ENCODE measurements at regions of chr5 and their contacts with region 1.

Region 1: GRCh38 chr5:163408311-163408923 is 29.0 kb upstream of the CCNG1 start:
- DNase-seq: peak; percentile 37 to 65
- H3K4me3 ChIP-seq: no peak overlapping the region
- H3K4me3 Mint-ChIP-seq: no peak overlapping the region
- H3K27ac Mint-ChIP-seq: no peak overlapping the region
- H3K4me1 ChIP-seq: no peaks in the 10 kb centered on the region
- H3K4me1 Mint-ChIP-seq: no peaks in the 10 kb centered on the region
- H3K27me3 ChIP-seq: no peaks in the 10 kb centered on the region
- H3K27me3 Mint-ChIP-seq: no peaks in the 10 kb centered on the region
- CTCF ChIP-seq: peak; percentile 85 to 89

Region 2: DNA sequence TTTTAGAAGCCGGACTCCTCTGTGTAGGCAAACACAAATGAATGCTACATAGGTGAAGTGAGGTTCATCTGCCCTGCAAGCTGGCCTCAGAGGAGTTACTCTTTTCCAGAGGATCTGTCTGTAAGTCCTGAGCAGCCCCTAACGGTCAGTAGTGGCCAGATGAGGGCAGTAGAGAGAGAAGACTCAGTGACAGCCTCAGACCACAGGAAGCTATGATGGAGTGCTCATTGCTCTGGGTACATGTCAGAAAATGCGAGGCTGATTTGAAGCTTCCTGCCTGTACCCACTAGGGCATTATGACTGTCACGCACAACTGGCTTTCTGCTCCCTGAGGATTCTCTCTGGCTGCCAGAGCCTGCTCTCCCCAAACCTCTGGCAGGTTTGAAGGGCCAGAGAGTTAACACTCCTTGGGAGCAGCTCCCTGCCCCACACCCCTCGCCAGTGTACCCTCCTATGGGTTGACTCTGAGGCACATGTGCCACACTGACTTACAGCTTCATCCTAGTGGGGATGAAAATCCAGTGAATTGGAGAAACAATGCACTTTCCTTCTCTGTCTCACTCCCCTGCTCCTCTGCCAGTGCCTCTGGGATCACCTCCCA is 1199.3 kb before region 1 on chr5:
- CTCF ChIA-PET with region 1: interaction called, 7 read pairs
- POLR2A ChIA-PET with region 1: no interaction called
- intact Hi-C with region 1: loop called (anchors 1 kb)
- DNase-seq: peak; percentile 66 to 69
- H3K4me3 ChIP-seq: no peak overlapping the region
- H3K4me3 Mint-ChIP-seq: no peak overlapping the region
- H3K27ac Mint-ChIP-seq: no peak overlapping the region
- H3K4me1 ChIP-seq: no peaks in the 10 kb centered on the region
- H3K4me1 Mint-ChIP-seq: no peaks in the 10 kb centered on the region
- H3K27me3 ChIP-seq: no peaks in the 10 kb centered on the region; the same call in 1 of the 2 replicates
- H3K27me3 Mint-ChIP-seq: peaks cover 6% of the 10 kb centered on the region
- CTCF ChIP-seq: peak; percentile 55 to 74

Region 3: GRCh38 chr5:162956570-162956969 is 451.8 kb before region 1 on chr5:
- CTCF ChIA-PET with region 1: no interaction called
- POLR2A ChIA-PET with region 1: no interaction called
- intact Hi-C with region 1: loop called (anchors 5 kb)
- DNase-seq: peak in 1 of 2 experiments; percentile 3
- H3K4me3 ChIP-seq: no peak overlapping the region
- H3K4me3 Mint-ChIP-seq: no peak overlapping the region
- H3K27ac Mint-ChIP-seq: no peak overlapping the region
- H3K4me1 ChIP-seq: no peaks in the 10 kb centered on the region
- H3K4me1 Mint-ChIP-seq: no peaks in the 10 kb centered on the region
- H3K27me3 ChIP-seq: no peaks in the 10 kb centered on the region
- H3K27me3 Mint-ChIP-seq: no peaks in the 10 kb centered on the region
- CTCF ChIP-seq: no peak

Region 4: DNA sequence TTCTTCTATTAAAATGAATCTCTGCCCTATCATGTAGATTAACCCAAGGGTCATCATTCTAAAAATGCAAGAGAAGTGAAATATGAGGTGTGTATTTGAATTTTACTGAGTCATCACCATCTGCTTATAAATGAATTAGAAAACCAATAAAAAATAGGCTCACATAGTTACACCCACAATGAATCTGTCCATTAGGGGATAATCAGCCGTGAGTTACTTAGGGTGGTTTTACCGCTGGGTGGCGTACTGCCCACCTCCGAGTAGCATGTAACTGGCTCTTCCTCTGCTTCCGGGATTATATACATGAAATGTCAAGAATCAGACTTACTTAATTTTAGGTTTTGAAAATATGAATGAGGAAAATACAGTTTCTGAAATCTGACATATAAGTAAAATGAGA is 304.0 kb before region 1 on chr5:
- CTCF ChIA-PET with region 1: interaction called, 3 read pairs
- POLR2A ChIA-PET with region 1: no interaction called
- intact Hi-C with region 1: loop called (anchors 1 kb)
- DNase-seq: peak in 1 of 2 experiments; percentile 18
- H3K4me3 ChIP-seq: no peak overlapping the region
- H3K4me3 Mint-ChIP-seq: no peak overlapping the region
- H3K27ac Mint-ChIP-seq: no peak overlapping the region
- H3K4me1 ChIP-seq: no peaks in the 10 kb centered on the region
- H3K4me1 Mint-ChIP-seq: no peaks in the 10 kb centered on the region
- H3K27me3 ChIP-seq: no peaks in the 10 kb centered on the region
- H3K27me3 Mint-ChIP-seq: peaks cover 5% of the 10 kb centered on the region
- CTCF ChIP-seq: peak; percentile 18 to 27

Region 5: GRCh38 chr5:163347671-163348070 is 60.7 kb before region 1 on chr5:
- CTCF ChIA-PET with region 1: interaction called, 13 read pairs
- POLR2A ChIA-PET with region 1: no interaction called
- intact Hi-C with region 1: loop called (anchors 1 kb)
- DNase-seq: peak in 1 of 2 experiments; percentile 71
- H3K4me3 ChIP-seq: no peak overlapping the region
- H3K4me3 Mint-ChIP-seq: no peak overlapping the region
- H3K27ac Mint-ChIP-seq: no peak overlapping the region
- H3K4me1 ChIP-seq: no peaks in the 10 kb centered on the region
- H3K4me1 Mint-ChIP-seq: no peaks in the 10 kb centered on the region
- H3K27me3 ChIP-seq: no peaks in the 10 kb centered on the region
- H3K27me3 Mint-ChIP-seq: no peaks in the 10 kb centered on the region
- CTCF ChIP-seq: peak; percentile 75 to 82

Measured in Caco-2 (cell line).